ENCODE measurements at regions of chr20 and their contacts with region 1.

Region 1: DNA sequence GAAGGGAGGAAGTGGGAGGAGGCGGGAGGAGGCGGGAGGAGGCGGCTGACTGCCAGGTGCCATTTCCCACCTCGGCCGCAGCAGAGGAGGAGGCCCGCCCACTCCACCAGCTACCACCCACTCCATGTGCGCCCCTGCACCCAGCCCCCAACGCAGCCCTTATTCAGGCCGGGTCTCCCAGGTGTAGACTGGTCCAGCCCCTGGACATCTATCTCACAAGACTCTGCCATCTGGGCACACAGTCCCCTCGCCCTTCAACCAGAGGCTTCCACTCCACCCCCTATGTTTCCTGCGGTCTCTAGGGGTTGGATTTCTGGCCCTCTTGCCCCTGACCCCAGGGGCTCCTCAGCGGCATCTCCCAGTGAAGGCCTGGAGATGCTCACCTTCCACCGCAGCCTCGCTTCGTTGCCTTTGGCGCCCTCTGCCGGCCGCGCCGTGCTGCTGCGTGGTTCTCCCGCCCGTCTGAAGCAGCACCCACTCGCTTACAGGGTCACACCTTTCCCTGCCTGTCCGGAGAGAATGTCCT is 32.6 kb upstream of the FAM83D start:
- DNase-seq: peak; percentile 91
- H3K4me3 ChIP-seq: no peak overlapping the region; a peak in 2 of 4 replicates
- H3K27ac ChIP-seq: peak overlapping the region in 1 of 2 experiments; percentile 80; a peak in 2 of 4 replicates
- H3K4me1 ChIP-seq: peaks cover 0 to 36% of the 10 kb centered on the region in 2 experiments; a peak in 1 of 4 replicates
- H3K27me3 ChIP-seq: peaks cover under 1% of the 10 kb centered on the region; the same call in 1 of the 2 replicates
- CTCF ChIP-seq: peak; percentile 83
- EP300 ChIP-seq: no peak
- RAD21 ChIP-seq: peak; percentile 88

Region 2: DNA sequence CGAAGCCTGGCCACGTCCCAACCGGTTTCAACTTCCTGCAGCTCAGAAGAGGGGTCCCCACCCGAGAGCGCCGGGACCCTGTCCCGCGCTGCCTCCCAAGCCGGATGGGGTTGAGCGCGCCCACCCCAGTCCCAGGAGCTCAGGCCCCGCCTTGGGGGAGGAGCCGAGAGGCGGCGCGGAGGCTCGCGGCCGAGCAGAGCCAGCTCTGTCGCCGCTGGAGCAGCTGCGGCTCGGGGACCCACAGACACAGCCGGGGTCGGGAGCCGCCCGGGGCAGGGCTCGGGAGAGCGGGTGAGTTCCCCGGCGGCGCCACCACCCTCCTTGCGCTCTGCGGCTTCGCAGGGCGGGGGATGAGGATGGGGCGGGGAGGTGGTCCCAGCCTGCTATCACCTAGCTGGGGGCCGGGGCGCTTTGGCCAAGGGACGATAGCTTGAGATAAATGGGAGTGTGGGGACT is 88.1 kb before region 1 on chr20 and contains the start of gene PPP1R16B:
- CTCF ChIA-PET with region 1: interaction called, 25 read pairs
- POLR2A ChIA-PET with region 1: no interaction called
- DNase-seq: peak; percentile 94
- H3K4me3 ChIP-seq: peak within 1 kb of the TSS; percentile 56
- H3K27ac ChIP-seq: peak within 1 kb of the TSS in 1 of 2 experiments; percentile 77; a peak in 2 of 4 replicates
- H3K4me1 ChIP-seq: peaks cover 0 to 22% of the 10 kb centered on the region in 2 experiments; a peak in 1 of 4 replicates
- H3K27me3 ChIP-seq: peaks cover 32% of the 10 kb centered on the region
- CTCF ChIP-seq: no peak
- EP300 ChIP-seq: no peak
- RAD21 ChIP-seq: no peak
- polyA plus RNA-seq, gene PPP1R16B: 0.28 and 0.91 TPM in 2 replicates

Region 3: DNA sequence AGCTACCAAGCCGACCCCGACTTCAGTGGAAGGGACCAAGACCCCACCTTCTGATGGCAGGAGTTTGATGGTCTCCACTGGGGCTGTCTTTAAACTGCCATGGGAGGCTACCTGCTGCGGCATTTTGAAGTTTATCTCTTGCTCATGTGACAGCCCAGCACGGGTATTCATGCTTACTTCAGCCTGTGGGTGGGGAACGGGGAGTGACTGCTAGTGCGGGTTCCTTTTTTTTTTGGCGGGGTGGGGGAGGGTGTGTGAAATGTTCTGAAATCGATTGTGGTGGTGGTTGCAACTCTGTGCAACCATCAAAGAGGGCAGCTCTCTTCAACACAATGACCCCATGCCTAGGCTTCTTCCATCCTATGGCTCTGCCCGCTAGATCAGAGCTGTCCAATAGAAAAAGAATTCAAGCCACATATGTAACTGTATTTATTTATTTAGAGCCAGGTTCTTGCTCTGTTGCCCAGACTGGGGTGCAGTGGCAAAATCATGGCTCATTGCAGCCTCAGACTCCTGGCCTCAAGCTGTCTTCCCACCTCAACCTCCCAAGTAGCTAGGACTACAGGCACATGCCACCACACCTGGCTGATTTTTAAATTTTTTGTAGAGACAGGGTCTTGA is 34.4 kb before region 1 on chr20:
- CTCF ChIA-PET with region 1: interaction called, 18 read pairs
- POLR2A ChIA-PET with region 1: interaction called, 3 read pairs
- DNase-seq: no peak
- H3K4me3 ChIP-seq: no peak overlapping the region
- H3K27ac ChIP-seq: no peak overlapping the region; a peak in 1 of 4 replicates
- H3K4me1 ChIP-seq: peaks cover 0 to 27% of the 10 kb centered on the region in 2 experiments; a peak in 2 of 4 replicates
- H3K27me3 ChIP-seq: no peaks in the 10 kb centered on the region
- CTCF ChIP-seq: no peak
- EP300 ChIP-seq: no peak
- RAD21 ChIP-seq: no peak

Region 4: GRCh38 chr20:38875175-38875993 is 18.2 kb before region 1 on chr20:
- CTCF ChIA-PET with region 1: interaction called, 58 read pairs
- POLR2A ChIA-PET with region 1: interaction called, 20 read pairs
- DNase-seq: peak; percentile 74
- H3K4me3 ChIP-seq: no peak overlapping the region; a peak in 1 of 4 replicates
- H3K27ac ChIP-seq: peak overlapping the region in 1 of 2 experiments; percentile 100; a peak in 3 of 4 replicates
- H3K4me1 ChIP-seq: peaks cover 0 to 86% of the 10 kb centered on the region in 2 experiments; a peak in 2 of 4 replicates
- H3K27me3 ChIP-seq: peaks cover 16% of the 10 kb centered on the region; the same call in 1 of the 2 replicates
- CTCF ChIP-seq: no peak
- EP300 ChIP-seq: peak in 1 of 2 experiments; percentile 96
- RAD21 ChIP-seq: peak; percentile 36

Region 5: DNA sequence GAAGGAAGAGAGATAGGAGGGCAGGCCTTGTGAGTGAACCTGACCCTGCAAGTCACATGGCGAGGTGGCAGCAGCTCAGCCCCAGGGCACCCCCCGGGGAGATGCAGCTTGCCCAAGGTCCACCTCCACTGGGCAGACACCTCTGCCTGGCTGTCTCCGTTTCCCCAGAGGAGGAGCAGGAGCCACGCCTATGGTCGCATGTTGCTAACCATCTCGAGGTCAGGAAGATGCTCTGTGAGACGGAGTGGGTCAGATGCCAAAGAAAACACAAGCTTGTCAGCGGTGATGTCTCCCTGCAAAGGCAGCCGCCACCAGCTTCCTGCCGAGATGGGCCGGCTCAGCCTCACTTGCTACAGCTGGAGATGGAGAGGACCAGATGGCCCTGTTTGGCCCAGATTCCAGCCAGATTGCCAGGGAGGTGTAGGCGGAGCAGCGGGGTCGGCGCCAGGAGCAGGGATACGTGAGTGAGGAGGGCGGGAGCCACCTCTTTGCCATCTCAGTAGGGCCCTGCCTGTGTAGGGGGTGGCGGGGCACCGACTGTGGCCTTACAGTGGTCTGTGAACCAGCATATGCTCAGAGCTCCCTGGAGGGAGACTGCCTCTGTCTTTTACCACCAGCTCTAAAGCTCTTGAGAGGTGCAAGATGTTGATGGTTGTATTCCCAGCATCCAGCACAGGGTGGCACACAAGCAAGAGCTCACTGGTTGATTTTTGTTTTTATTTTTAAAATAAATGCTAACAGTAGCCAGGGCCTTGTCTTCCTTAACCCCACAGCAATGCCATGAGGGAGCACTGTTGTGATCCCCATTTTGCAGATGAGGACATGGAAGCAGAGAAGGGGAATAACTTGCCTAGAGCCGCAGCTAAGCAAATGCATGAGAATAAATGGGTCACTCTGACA is 10.3 kb before region 1 on chr20:
- CTCF ChIA-PET with region 1: interaction called, 52 read pairs
- POLR2A ChIA-PET with region 1: interaction called, 23 read pairs
- DNase-seq: peak; percentile 89
- H3K4me3 ChIP-seq: no peak overlapping the region
- H3K27ac ChIP-seq: peak overlapping the region in 1 of 2 experiments; percentile 99; a peak in 2 of 4 replicates
- H3K4me1 ChIP-seq: peaks cover 0 to 75% of the 10 kb centered on the region in 2 experiments; a peak in 2 of 4 replicates
- H3K27me3 ChIP-seq: no peaks in the 10 kb centered on the region
- CTCF ChIP-seq: peak; percentile 13; the same call in 1 of the 2 replicates
- EP300 ChIP-seq: peak; percentile 67 to 98; a peak in 3 of 4 replicates
- RAD21 ChIP-seq: peak; percentile 23; the same call in 1 of the 2 replicates

Region 6: DNA sequence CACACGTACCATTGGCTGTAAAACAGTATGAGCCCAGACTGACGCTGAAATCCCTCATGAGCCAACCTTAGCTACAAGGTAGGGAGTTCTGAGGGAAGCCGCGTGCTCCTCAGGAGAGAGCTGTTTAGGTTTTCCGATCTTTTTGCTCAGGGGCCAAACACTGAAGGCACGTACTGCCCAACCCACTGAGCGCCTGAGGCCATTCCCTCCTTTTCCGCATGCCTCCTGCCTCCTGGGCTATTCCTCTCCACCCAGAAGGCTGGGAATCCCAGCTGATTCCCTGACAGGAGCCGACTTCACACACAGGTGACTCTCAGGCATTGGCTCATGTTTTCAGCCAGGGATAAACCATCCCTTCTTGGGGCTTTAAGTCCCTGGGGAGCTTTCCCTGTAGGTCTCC is 27.2 kb after region 1 on chr20:
- CTCF ChIA-PET with region 1: interaction called, 12 read pairs
- POLR2A ChIA-PET with region 1: interaction called, 3 read pairs
- DNase-seq: no peak
- H3K4me3 ChIP-seq: no peak overlapping the region
- H3K27ac ChIP-seq: no peak overlapping the region
- H3K4me1 ChIP-seq: no peaks in the 10 kb centered on the region; a peak in 1 of 4 replicates
- H3K27me3 ChIP-seq: peaks cover 11% of the 10 kb centered on the region; the same call in 1 of the 2 replicates
- CTCF ChIP-seq: no peak
- EP300 ChIP-seq: no peak
- RAD21 ChIP-seq: no peak